H1 (cell line): ENCODE measurements at regions of chr17 and their contacts with region 1.

Region 1: DNA sequence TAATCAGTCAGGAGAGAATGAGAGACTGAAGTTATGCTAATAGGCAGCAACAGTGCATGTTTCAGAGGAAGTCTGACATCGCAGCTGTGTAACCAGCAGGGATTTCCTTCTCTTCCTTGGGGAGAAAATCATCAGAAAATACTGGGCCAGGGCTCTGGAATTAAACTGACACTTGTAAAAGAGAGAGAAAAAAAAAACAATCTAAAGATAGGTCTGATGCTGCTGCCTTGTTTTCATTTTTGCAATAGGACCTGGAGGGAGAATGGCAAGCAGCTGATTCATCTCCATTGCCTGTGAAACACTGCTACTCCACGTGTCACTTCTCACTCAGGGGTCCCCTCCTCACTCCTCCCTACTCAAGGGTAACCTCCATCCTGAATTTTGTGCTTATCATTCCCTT is 17.7 kb upstream of the CORO6 start:
- DNase-seq: no peak
- H3K4me3 ChIP-seq: no peak overlapping the region
- H3K27ac ChIP-seq: no peak overlapping the region
- H3K4me1 ChIP-seq: peaks cover 0 to 10% (median 3%) of the 10 kb centered on the region in 4 experiments; a peak in 3 of 7 replicates
- H3K27me3 ChIP-seq: no peaks in the 10 kb centered on the region
- CTCF ChIP-seq: no peak
- EP300 ChIP-seq: no peak
- POLR2A ChIP-seq: no peak
- RAD21 ChIP-seq: no peak

Region 2: GRCh38 chr17:29369831-29370735 is 270.3 kb before region 1 on chr17:
- CTCF ChIA-PET with region 1: no interaction called
- POLR2A ChIA-PET with region 1: no interaction called
- DNase-seq: peak in 1 of 2 experiments; percentile 78
- H3K4me3 ChIP-seq: peak overlapping the region in 2 of 4 experiments; percentile 13 to 48; a peak in 3 of 8 replicates
- H3K27ac ChIP-seq: no peak overlapping the region
- H3K4me1 ChIP-seq: peaks cover 2 to 7% (median 3%) of the 10 kb centered on the region in 4 experiments; a peak in 5 of 7 replicates
- H3K27me3 ChIP-seq: no peaks in the 10 kb centered on the region
- CTCF ChIP-seq: peak; percentile 34 to 75 (median 59)
- EP300 ChIP-seq: no peak
- POLR2A ChIP-seq: peak in 1 of 2 experiments; percentile 38; a peak in 1 of 3 replicates
- RAD21 ChIP-seq: peak; percentile 70 to 79

Region 3: DNA sequence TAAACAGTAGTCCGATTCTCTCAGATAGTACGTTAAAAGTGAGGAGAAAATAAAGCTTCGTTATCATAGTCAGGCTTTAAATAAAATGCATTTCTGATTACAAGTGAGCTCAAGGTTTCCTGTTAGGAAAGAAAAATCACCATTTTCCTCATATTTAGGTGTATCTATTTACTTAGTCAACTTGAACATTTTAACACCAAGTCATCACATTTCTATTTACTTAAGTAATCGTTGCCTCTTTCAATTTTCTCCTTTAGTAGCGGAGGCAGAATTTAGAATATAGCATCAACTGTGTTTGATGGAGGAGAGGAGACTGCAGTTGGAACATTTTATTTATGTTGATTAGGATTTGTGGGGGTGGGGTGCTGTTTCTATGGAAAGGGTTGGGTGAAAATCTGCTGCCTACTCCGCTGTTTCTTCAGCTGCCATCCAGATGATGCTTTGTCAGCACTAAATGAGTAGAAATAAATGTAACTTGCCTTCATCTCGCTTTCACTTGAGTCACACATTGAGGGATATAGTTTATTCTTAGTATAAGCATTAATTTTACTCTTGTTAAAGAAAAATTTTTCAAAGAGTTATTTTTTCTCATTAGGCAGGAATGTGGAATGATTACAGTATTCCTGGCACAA is 115.8 kb before region 1 on chr17:
- CTCF ChIA-PET with region 1: no interaction called
- POLR2A ChIA-PET with region 1: no interaction called
- DNase-seq: no peak
- H3K4me3 ChIP-seq: no peak overlapping the region
- H3K27ac ChIP-seq: no peak overlapping the region
- H3K4me1 ChIP-seq: no peaks in the 10 kb centered on the region
- H3K27me3 ChIP-seq: no peaks in the 10 kb centered on the region
- CTCF ChIP-seq: no peak
- EP300 ChIP-seq: no peak
- POLR2A ChIP-seq: no peak
- RAD21 ChIP-seq: no peak

Region 4: GRCh38 chr17:29622337-29623282 is 17.8 kb before region 1 on chr17 and contains the start of gene CORO6:
- CTCF ChIA-PET with region 1: interaction called, 68 read pairs
- POLR2A ChIA-PET with region 1: interaction called, 4 read pairs
- DNase-seq: peak in 1 of 2 experiments; percentile 94
- H3K4me3 ChIP-seq: peak within 1 kb of the TSS; percentile 53 to 84 (median 69)
- H3K27ac ChIP-seq: peak within 1 kb of the TSS; percentile 72
- H3K4me1 ChIP-seq: peaks cover 11 to 24% (median 16%) of the 10 kb centered on the region in 4 experiments
- H3K27me3 ChIP-seq: peaks cover 5 to 42% (median 29%) of the 10 kb centered on the region in 4 experiments
- CTCF ChIP-seq: no peak
- EP300 ChIP-seq: no peak
- POLR2A ChIP-seq: peak in 1 of 2 experiments; percentile 83; a peak in 2 of 3 replicates
- RAD21 ChIP-seq: no peak
- total RNA-seq, gene CORO6: 2.1 and 2.5 TPM in 2 replicates

Region 5: GRCh38 chr17:29777663-29778062 is 137.2 kb after region 1 on chr17:
- CTCF ChIA-PET with region 1: interaction called, 97 read pairs
- POLR2A ChIA-PET with region 1: no interaction called
- DNase-seq: no peak
- H3K4me3 ChIP-seq: no peak overlapping the region
- H3K27ac ChIP-seq: no peak overlapping the region
- H3K4me1 ChIP-seq: no peaks in the 10 kb centered on the region
- H3K27me3 ChIP-seq: no peaks in the 10 kb centered on the region
- CTCF ChIP-seq: no peak
- EP300 ChIP-seq: no peak
- POLR2A ChIP-seq: no peak
- RAD21 ChIP-seq: no peak